ENCODE measurements at regions of chr2 and their contacts with region 1.

Region 1: GRCh38 chr2:233251306-233252116 is at the start of gene ATG16L1:
- DNase-seq: peak; percentile 93 to 99 (median 96)

Region 2: GRCh38 chr2:232611551-232612218 is 639.8 kb before region 1 on chr2:
- intact Hi-C with region 1: loop called (anchors 1 kb)
- DNase-seq: peak in 9 of 10 donors; percentile 53 to 95 (median 82)

Region 3: DNA sequence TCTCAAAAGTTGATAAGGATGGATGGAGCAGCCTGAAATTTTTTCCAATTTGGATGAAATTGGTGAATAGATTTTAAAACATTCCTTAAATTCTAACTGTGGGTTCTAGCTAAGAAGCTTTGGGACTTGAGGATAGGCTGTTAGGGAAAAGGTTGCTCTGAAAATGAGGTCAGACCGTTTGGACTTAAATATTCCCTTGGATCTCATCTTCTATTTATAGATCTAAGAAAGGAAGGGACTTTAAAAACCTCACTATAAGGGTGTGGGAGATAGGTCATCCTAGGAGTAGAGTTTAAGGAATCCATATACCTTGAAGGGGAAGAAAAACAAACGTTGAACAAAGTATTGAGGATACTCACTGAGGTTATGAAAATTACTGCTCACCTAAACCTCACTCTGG is 398.8 kb before region 1 on chr2:
- intact Hi-C with region 1: loop called (anchors 2 kb)
- DNase-seq: no peak

Region 4: GRCh38 chr2:233129351-233129987 is 122.0 kb before region 1 on chr2:
- intact Hi-C with region 1: no loop called
- DNase-seq: peak in 1 of 10 donors; percentile 33

Region 5: GRCh38 chr2:233225230-233226068 is 26.1 kb before region 1 on chr2:
- intact Hi-C with region 1: no loop called
- DNase-seq: no peak

Region 6: GRCh38 chr2:233288719-233289118 is 37.2 kb after region 1 on chr2:
- intact Hi-C with region 1: no loop called
- DNase-seq: peak in 4 of 10 donors; percentile 10 to 41 (median 26)

Region 7: GRCh38 chr2:233353769-233354499 is 102.4 kb after region 1 on chr2 and contains the start of gene DGKD:
- intact Hi-C with region 1: loop called (anchors 5 kb)
- DNase-seq: peak in 4 of 10 donors; percentile 42 to 91 (median 64)

Region 8: DNA sequence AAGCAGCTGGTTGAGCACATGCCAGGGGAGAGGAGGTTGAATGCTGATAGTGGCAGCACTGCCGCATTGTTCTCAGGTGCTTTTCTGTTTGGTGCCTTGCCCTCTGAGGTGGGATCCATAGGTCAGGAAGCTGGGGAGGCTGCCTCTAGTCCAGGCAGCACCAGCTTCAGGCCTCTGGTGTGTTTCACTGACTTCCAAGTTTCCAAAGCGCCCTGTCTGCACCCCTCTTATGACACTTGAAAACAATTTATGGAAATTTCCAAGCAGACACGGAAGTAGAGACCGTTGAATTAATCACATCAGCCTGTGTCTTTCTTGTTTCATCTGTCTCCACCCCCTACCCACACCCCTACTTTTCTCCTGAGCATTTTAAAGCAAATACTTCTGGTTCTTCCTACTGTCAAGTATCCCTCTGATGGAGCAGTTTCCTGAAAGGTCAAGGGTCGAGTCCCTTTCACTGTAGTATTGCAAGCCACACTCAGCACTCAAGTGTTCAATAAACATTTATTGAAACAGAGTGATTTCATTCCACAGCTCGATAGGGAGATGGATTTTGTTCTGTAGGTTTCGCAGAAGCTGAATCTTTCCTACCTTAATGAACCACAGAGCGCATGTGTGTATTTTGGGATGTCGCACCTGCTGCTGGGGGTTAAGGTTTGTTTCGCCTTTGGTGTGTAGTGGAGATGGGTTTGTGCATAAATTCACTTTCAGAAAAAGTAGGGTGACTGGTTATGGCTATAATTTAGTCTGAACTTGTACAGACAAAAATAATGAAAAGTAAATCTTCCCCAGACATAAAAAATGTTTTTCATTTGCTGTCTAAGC is 124.2 kb after region 1 on chr2:
- intact Hi-C with region 1: no loop called
- DNase-seq: no peak

Region 9: GRCh38 chr2:233443468-233444183 is 192.1 kb after region 1 on chr2:
- intact Hi-C with region 1: loop called (anchors 10 kb)
- DNase-seq: peak; percentile 54 to 96 (median 78)